HEK293 (cell line): ENCODE measurements at regions of chr9 and their contacts with region 1.

Region 1: DNA sequence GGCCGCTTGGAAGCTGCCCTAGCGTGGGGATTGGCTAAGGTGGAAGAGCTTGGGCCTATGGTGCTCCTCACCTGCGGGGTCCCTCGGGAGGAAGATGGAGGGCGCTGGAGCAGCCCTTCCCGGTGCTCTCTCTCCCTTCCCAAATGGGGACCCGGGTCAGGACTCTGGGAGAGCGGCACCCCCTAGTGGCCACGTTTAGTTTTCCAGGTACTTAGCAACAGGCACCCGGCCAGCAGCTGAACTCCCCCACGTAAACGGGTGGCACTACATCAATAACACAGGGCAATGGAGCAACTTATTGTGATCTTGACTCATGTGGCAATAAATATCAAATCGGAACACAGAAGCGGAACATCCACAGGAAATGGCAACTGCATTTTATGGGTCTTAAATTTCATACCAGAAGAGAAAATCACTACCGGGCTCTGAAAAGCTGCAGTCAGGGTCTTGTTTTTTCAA is 316.6 kb downstream of the AGTPBP1 start:
- H3K4me3 ChIP-seq: no peak overlapping the region
- H3K27ac ChIP-seq: no peak overlapping the region
- H3K4me1 ChIP-seq: no peaks in the 10 kb centered on the region
- CTCF ChIP-seq: peak; percentile 88

Region 2: GRCh38 chr9:84397151-84397728 is 1027.9 kb before region 1 on chr9:
- CTCF ChIA-PET with region 1: interaction called, 10 read pairs
- POLR2A ChIA-PET with region 1: no interaction called
- H3K4me3 ChIP-seq: no peak overlapping the region
- H3K27ac ChIP-seq: no peak overlapping the region
- H3K4me1 ChIP-seq: no peaks in the 10 kb centered on the region
- CTCF ChIP-seq: 0 out of 2 replicates have a peak, but pooled peaks have one; percentile 15

Region 3: DNA sequence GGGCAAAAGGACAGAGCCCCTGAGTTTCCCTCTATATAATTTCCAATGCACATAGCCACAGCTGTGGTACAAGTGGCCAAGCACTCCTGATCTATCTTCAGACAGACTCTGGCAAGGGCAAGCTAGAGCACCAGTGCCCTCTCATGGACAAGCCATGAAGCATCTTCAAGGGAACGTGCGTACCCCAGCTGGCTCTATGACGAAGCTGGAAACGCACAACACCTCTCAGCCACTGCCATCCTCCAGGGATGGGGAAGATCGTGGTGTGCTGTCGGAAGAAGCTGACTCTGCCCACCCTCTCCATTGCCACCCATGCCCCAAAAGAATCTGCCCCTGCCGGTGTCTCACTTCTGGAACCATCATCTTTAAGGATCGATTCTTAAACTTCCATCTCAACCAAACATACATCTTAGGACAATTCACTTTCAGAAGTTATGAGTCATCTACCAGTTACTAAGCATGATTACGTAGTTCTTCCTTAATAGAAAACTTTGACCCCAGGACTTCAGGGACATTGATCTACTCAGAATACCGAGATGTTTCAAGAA is 166.3 kb before region 1 on chr9:
- CTCF ChIA-PET with region 1: interaction called, 28 read pairs
- POLR2A ChIA-PET with region 1: no interaction called
- H3K4me3 ChIP-seq: peak overlapping the region; percentile 28
- H3K27ac ChIP-seq: no peak overlapping the region
- H3K4me1 ChIP-seq: no peaks in the 10 kb centered on the region
- CTCF ChIP-seq: peak; percentile 92

Region 4: GRCh38 chr9:85332487-85332886 is 92.7 kb before region 1 on chr9:
- CTCF ChIA-PET with region 1: interaction called, 17 read pairs
- POLR2A ChIA-PET with region 1: no interaction called
- H3K4me3 ChIP-seq: no peak overlapping the region
- H3K27ac ChIP-seq: no peak overlapping the region
- H3K4me1 ChIP-seq: no peaks in the 10 kb centered on the region
- CTCF ChIP-seq: peak; percentile 71